Naive thymus-derived CD4-positive, alpha-beta T cell (primary cell): ENCODE measurements at regions of chr5 and their contacts with region 1.

Region 1: GRCh38 chr5:68215208-68215897 is at the start of gene PIK3R1:
- DNase-seq: peak; percentile 86 to 96 (median 93)
- ATAC-seq: peak; percentile 91
- H3K4me3 ChIP-seq: peak within 1 kb of the TSS; percentile 73
- H3K4me3 Mint-ChIP-seq: peak within 1 kb of the TSS; percentile 84 to 94 (median 92)
- H3K27ac ChIP-seq: peak within 1 kb of the TSS; percentile 89
- H3K27ac Mint-ChIP-seq: peak within 1 kb of the TSS; percentile 85 to 97 (median 94)
- H3K4me1 ChIP-seq: peaks cover 16 to 18% of the 10 kb centered on the region in 2 donors
- H3K4me1 Mint-ChIP-seq: peaks cover 35 to 46% (median 44%) of the 10 kb centered on the region in 7 donors
- H3K27me3 ChIP-seq: no peaks in the 10 kb centered on the region
- H3K27me3 Mint-ChIP-seq: no peaks in the 10 kb centered on the region
- total RNA-seq, gene PIK3R1: 72.0 to 207 (median 131) TPM

Region 2: DNA sequence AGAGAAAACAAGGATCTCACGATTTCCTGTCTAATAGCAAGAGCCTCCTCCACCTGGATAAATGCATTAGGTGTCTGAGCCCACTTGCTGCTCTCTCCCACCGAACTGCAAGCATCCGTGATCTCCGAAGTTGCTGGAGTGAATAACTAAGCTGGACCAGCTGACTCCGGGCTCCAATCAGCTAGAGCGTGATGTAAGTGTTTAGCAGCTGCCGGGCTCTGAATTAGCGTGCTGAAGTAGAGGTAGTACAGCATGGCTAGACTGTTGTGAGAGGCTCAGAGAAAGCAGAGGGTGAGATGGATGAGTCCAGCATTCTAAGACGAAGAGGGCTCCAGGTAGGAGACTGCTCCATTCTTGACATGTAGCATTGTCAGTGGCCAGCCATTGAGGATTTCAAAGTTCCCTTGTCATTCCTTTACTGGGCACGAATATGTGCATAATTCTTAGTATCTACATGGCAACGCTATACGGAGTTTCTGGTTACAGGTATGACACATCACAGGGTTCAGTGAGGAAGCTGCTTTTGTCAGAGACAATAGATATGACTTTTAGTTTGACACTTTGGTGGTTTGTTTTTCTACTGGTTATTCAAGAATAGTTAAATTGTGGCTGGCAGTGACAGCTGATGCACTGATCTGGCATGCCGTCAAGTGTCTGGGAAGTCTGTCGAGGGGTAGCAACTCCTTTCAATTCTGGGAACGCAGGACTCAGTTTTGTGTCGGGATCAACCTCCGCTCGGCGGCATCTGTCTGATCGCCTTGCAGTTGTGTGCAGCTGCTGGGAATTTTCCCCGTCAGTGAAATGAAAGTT is 1386.6 kb before region 1 on chr5:
- CTCF ChIA-PET with region 1: no interaction called
- POLR2A ChIA-PET with region 1: no interaction called
- intact Hi-C with region 1: loop called in 1 of 2 experiments (anchors 10 kb)
- DNase-seq: peak; percentile 14 to 67 (median 55)
- ATAC-seq: peak; percentile 93
- H3K4me3 ChIP-seq: peak overlapping the region; percentile 36
- H3K4me3 Mint-ChIP-seq: peak overlapping the region; percentile 72 to 95 (median 84)
- H3K27ac ChIP-seq: peak overlapping the region; percentile 31
- H3K27ac Mint-ChIP-seq: peak overlapping the region; percentile 12 to 92 (median 71)
- H3K4me1 ChIP-seq: peaks cover 0 to 4% of the 10 kb centered on the region in 2 donors
- H3K4me1 Mint-ChIP-seq: peaks cover 12 to 69% (median 19%) of the 10 kb centered on the region in 7 donors
- H3K27me3 ChIP-seq: no peaks in the 10 kb centered on the region
- H3K27me3 Mint-ChIP-seq: peaks cover 0 to 50% (median 26%) of the 10 kb centered on the region in 5 donors

Region 3: GRCh38 chr5:67209142-67209771 is 1006.1 kb before region 1 on chr5:
- CTCF ChIA-PET with region 1: no interaction called
- POLR2A ChIA-PET with region 1: interaction called, 3 read pairs
- intact Hi-C with region 1: loop called (anchors 2 to 5 kb)
- DNase-seq: peak; percentile 33 to 77 (median 69)
- ATAC-seq: peak; percentile 74
- H3K4me3 ChIP-seq: peak overlapping the region; percentile 14
- H3K4me3 Mint-ChIP-seq: peak overlapping the region in 5 of 10 donors; percentile 47 to 55 (median 50)
- H3K27ac ChIP-seq: peak overlapping the region; percentile 0
- H3K27ac Mint-ChIP-seq: peak overlapping the region; percentile 78 to 98 (median 85)
- H3K4me1 ChIP-seq: peaks cover 50 to 54% of the 10 kb centered on the region in 2 donors
- H3K4me1 Mint-ChIP-seq: peaks cover 39 to 71% (median 66%) of the 10 kb centered on the region in 7 donors
- H3K27me3 ChIP-seq: no peaks in the 10 kb centered on the region
- H3K27me3 Mint-ChIP-seq: peaks cover 0 to 2% (median 0%) of the 10 kb centered on the region in 5 donors

Region 4: GRCh38 chr5:68086857-68087256 is 128.5 kb before region 1 on chr5:
- CTCF ChIA-PET with region 1: no interaction called
- POLR2A ChIA-PET with region 1: no interaction called
- intact Hi-C with region 1: no loop called
- DNase-seq: no peak
- ATAC-seq: no peak
- H3K4me3 ChIP-seq: no peak overlapping the region
- H3K4me3 Mint-ChIP-seq: no peak overlapping the region
- H3K27ac ChIP-seq: no peak overlapping the region
- H3K27ac Mint-ChIP-seq: no peak overlapping the region
- H3K4me1 ChIP-seq: no peaks in the 10 kb centered on the region
- H3K4me1 Mint-ChIP-seq: no peaks in the 10 kb centered on the region
- H3K27me3 ChIP-seq: no peaks in the 10 kb centered on the region
- H3K27me3 Mint-ChIP-seq: peaks cover 0 to 5% (median 3%) of the 10 kb centered on the region in 5 donors

Region 5: DNA sequence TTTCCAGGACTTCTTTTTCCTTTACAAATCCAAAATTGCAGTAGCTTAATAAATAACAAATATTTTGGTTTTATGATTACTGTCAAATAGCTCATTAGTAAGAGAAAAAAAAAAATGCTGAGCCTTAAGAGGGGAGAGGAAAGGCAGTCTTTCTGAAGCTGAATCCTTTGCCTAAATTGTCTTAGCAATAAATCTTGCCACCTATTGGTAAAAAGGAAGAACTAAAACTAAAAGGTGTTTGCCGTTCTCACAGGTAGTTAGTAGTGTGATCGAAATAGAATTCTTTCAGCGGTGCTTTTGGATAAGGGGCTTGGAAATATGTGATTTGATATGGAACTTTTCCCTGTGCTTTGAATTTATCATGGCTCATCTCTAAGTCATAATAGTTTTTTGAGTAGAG is 31.4 kb after region 1 on chr5:
- CTCF ChIA-PET with region 1: interaction called, 12 read pairs
- POLR2A ChIA-PET with region 1: interaction called, 28 read pairs
- intact Hi-C with region 1: loop called (anchors 1 to 5 kb)
- DNase-seq: peak in 6 of 9 donors; percentile 29 to 60 (median 46)
- ATAC-seq: no peak
- H3K4me3 ChIP-seq: no peak overlapping the region
- H3K4me3 Mint-ChIP-seq: peak overlapping the region in 3 of 10 donors; percentile 7 to 25 (median 16)
- H3K27ac ChIP-seq: no peak overlapping the region
- H3K27ac Mint-ChIP-seq: peak overlapping the region in 7 of 9 donors; percentile 18 to 67 (median 65)
- H3K4me1 ChIP-seq: peaks cover 36 to 59% of the 10 kb centered on the region in 2 donors
- H3K4me1 Mint-ChIP-seq: peaks cover 58 to 94% (median 88%) of the 10 kb centered on the region in 7 donors
- H3K27me3 ChIP-seq: no peaks in the 10 kb centered on the region
- H3K27me3 Mint-ChIP-seq: no peaks in the 10 kb centered on the region

Region 6: GRCh38 chr5:68279984-68280383 is 64.6 kb after region 1 on chr5:
- CTCF ChIA-PET with region 1: interaction called, 6 read pairs
- POLR2A ChIA-PET with region 1: interaction called, 24 read pairs
- intact Hi-C with region 1: loop called (anchors 1 kb)
- DNase-seq: peak in 8 of 9 donors; percentile 32 to 84 (median 80)
- ATAC-seq: peak; percentile 94
- H3K4me3 ChIP-seq: peak overlapping the region; percentile 63
- H3K4me3 Mint-ChIP-seq: peak overlapping the region; percentile 84 to 95 (median 90)
- H3K27ac ChIP-seq: peak overlapping the region; percentile 70
- H3K27ac Mint-ChIP-seq: peak overlapping the region; percentile 94 to 98 (median 97)
- H3K4me1 ChIP-seq: peaks cover 59 to 65% of the 10 kb centered on the region in 2 donors
- H3K4me1 Mint-ChIP-seq: peaks cover 39 to 94% (median 81%) of the 10 kb centered on the region in 7 donors
- H3K27me3 ChIP-seq: no peaks in the 10 kb centered on the region
- H3K27me3 Mint-ChIP-seq: no peaks in the 10 kb centered on the region

Region 7: GRCh38 chr5:68652534-68652965 is 437.2 kb after region 1 on chr5:
- CTCF ChIA-PET with region 1: no interaction called
- POLR2A ChIA-PET with region 1: no interaction called
- intact Hi-C with region 1: no loop called
- DNase-seq: no peak
- ATAC-seq: no peak
- H3K4me3 ChIP-seq: no peak overlapping the region
- H3K4me3 Mint-ChIP-seq: no peak overlapping the region
- H3K27ac ChIP-seq: no peak overlapping the region
- H3K27ac Mint-ChIP-seq: no peak overlapping the region
- H3K4me1 ChIP-seq: no peaks in the 10 kb centered on the region
- H3K4me1 Mint-ChIP-seq: no peaks in the 10 kb centered on the region
- H3K27me3 ChIP-seq: no peaks in the 10 kb centered on the region
- H3K27me3 Mint-ChIP-seq: no peaks in the 10 kb centered on the region

Region 8: DNA sequence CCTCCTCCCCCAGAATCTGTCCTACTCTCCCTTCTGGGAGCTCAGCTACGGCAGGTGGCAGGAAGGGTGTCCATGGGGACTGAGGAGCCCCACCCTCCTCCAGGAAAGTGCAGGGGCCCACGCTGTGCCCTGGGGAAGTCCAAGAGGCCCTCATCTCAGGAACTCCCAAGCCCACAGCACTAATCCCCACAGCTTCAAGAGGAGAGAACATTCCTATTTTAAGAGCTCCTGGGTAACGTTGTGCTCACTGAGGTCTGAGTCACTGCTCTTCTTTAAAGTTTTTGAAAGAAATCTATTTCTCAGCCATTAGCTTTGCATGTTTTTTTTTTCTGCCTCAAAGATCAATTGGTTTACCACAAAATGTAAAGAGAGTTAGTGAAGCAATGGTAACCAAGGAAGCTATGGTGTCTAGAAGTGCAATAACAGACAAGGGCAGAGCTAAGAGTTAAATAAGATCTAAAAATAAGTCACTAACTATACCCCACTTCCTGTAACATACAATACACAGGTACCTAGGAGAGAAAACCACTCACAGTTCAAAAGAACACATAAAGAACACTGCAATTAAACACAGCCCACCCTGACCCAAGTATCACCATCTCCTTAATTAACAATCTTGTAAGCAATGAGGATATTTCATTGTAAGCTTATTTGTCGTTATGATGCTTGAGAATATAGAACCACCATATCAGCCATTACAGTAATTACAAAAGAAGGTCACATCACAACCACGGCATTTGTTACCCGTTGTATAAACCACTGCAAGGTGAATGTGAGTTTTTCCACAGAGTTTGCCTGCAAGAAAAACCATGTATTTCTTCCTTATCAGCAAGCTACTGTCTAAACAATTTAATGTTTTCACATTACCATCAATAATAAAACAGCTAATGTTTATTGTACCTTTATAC is 496.2 kb after region 1 on chr5:
- CTCF ChIA-PET with region 1: no interaction called
- POLR2A ChIA-PET with region 1: no interaction called
- intact Hi-C with region 1: loop called in 1 of 2 experiments (anchors 10 kb)
- DNase-seq: peak in 7 of 9 donors; percentile 31 to 78 (median 70)
- ATAC-seq: peak; percentile 89
- H3K4me3 ChIP-seq: peak overlapping the region; percentile 37
- H3K4me3 Mint-ChIP-seq: peak overlapping the region; percentile 6 to 85 (median 72)
- H3K27ac ChIP-seq: peak overlapping the region; percentile 34
- H3K27ac Mint-ChIP-seq: peak overlapping the region; percentile 33 to 92 (median 83)
- H3K4me1 ChIP-seq: peaks cover 21 to 29% of the 10 kb centered on the region in 2 donors
- H3K4me1 Mint-ChIP-seq: peaks cover 12 to 47% (median 28%) of the 10 kb centered on the region in 7 donors
- H3K27me3 ChIP-seq: no peaks in the 10 kb centered on the region
- H3K27me3 Mint-ChIP-seq: peaks cover 0 to 6% (median 0%) of the 10 kb centered on the region in 5 donors